Ovary (tissue), 10 donors: ENCODE measurements at regions of chr6 and their contacts with region 1.

Region 1: DNA sequence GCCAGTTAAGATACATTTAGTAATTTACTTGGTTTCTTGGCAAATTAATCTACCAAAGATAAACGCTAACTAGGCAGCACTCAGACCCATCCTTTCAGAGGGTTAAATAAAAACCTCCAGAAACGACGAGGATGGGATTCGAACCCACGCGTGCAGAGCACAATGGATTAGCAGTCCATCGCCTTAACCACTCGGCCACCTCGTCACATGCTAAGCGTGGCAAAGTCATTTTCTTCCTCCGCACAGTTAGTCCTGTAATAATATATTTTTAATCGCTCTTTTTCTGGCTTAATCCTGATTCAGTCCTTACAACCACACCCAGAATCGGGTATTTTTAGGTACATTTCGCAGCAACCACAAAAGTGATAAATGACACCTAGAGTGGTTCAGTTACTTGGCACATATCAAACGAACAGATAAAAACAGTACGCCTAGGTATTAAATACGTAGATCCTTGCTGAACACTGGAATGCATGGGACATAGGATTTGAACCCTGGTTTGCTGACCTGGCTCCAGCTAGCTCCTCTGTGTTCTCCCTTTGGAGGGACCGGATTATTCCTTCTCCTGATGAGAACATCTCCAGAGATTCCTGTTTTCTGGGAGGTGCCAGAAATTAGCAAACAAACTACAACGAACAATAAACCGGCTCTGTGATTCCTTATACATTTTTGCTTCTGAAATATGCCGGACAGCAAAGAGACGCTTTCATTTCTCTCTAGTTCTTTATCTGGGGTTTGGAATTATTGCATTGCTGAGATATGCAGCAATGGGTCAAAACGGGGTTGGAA is 71.7 kb downstream of the GPX5 start:
- DNase-seq: no peak
- H3K4me3 ChIP-seq: no peak overlapping the region
- H3K27ac ChIP-seq: no peak overlapping the region
- H3K4me1 ChIP-seq: no peaks in the 10 kb centered on the region
- H3K27me3 ChIP-seq: no peaks in the 10 kb centered on the region
- CTCF ChIP-seq: no peak
- EP300 ChIP-seq: no peak
- POLR2A ChIP-seq: no peak

Region 2: GRCh38 chr6:27091661-27092646 is 1505.5 kb before region 1 on chr6:
- intact Hi-C with region 1: loop called in 1 of 4 experiments (anchors 5 kb)
- DNase-seq: no peak
- H3K4me3 ChIP-seq: no peak overlapping the region
- H3K27ac ChIP-seq: no peak overlapping the region
- H3K4me1 ChIP-seq: no peaks in the 10 kb centered on the region
- H3K27me3 ChIP-seq: peaks cover 2% of the 10 kb centered on the region
- CTCF ChIP-seq: no peak
- EP300 ChIP-seq: no peak
- POLR2A ChIP-seq: no peak